ENCODE measurements at regions of chr11 and their contacts with region 1.

Region 1: GRCh38 chr11:116563028-116563711 is 209.6 kb downstream of the BUD13 start:
- DNase-seq: peak; percentile 9
- H3K4me3 ChIP-seq: no peak overlapping the region
- H3K27ac ChIP-seq: no peak overlapping the region
- H3K4me1 ChIP-seq: peaks cover 9% of the 10 kb centered on the region
- H3K27me3 ChIP-seq: no peaks in the 10 kb centered on the region
- CTCF ChIP-seq: no peak
- POLR2A ChIP-seq: no peak

Region 2: DNA sequence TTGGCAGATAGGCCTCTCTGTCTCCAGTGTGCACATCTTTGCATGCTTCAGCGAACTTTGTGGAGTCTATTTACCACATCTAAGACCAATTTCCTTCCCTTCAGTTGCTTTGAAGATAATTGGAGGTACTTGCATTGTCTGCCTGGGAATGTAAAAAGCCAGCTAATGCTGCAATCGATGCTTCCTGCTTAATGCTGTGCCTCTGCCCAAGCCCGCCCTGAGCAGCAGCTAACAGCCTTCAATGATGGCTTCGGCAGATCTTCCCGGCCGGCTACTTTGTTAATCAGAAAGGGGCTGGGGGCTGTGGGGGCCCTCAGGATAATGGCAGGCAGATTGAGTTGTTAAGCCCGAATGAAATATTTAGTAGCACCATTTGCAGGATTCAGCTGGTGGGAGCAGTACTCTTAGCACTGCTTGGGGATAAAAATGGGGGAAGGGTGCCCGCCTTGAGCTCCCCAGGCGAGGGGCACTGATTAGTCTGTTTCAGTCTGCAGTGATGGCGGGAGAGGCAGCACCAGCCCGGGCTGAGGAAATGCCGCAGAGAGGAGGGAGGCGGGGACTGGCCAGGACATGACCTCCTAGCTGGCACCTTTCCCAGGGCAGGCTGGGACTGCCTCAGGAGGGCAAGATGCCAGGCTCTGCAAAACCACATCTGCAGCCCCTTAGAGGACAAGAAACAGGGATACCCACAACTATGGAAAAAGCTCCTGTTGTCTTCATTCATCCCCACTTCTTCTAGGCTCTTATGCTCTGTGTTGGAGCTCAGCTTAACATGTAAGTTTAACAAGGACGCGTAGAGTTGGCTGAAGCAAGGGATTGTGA is 250.4 kb before region 1 on chr11:
- CTCF ChIA-PET with region 1: no interaction called
- POLR2A ChIA-PET with region 1: no interaction called
- dilution Hi-C with region 1: no loop called
- intact Hi-C with region 1: no loop called
- DNase-seq: peak; percentile 83
- H3K4me3 ChIP-seq: no peak overlapping the region
- H3K27ac ChIP-seq: no peak overlapping the region
- H3K4me1 ChIP-seq: peaks cover 12% of the 10 kb centered on the region
- H3K27me3 ChIP-seq: peaks cover 0 to 2% of the 10 kb centered on the region in 2 experiments
- CTCF ChIP-seq: no peak
- POLR2A ChIP-seq: no peak

Region 3: GRCh38 chr11:116471608-116472256 is 91.4 kb before region 1 on chr11:
- CTCF ChIA-PET with region 1: no interaction called
- POLR2A ChIA-PET with region 1: no interaction called
- dilution Hi-C with region 1: no loop called
- intact Hi-C with region 1: loop called (anchors 2 kb)
- DNase-seq: peak; percentile 96
- H3K4me3 ChIP-seq: no peak overlapping the region
- H3K27ac ChIP-seq: peak overlapping the region; percentile 75
- H3K4me1 ChIP-seq: peaks cover 25% of the 10 kb centered on the region
- H3K27me3 ChIP-seq: peaks cover under 1 to 2% of the 10 kb centered on the region in 2 experiments
- CTCF ChIP-seq: no peak
- POLR2A ChIP-seq: no peak

Region 4: DNA sequence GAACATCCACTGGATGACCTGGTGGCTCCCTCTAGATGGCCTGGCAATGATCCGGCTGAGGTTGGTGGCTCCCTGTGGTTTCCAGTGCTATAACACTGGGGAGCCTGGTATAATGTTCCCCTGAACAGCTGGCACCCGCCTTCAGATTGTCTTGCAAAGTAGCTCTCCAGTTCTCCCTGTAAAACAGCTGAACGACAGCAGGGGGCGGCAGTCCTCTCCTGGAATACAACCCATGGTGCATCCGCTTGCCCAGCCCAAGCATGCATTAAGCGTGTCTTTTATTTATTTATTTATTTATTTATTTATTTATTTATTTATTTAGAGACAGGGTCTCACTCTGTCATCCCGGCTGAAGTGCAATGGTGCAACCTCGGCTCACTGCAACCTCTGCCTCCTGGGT is 49.3 kb before region 1 on chr11:
- CTCF ChIA-PET with region 1: interaction called, 11 read pairs
- POLR2A ChIA-PET with region 1: no interaction called
- dilution Hi-C with region 1: no loop called
- intact Hi-C with region 1: no loop called
- DNase-seq: peak; percentile 78
- H3K4me3 ChIP-seq: no peak overlapping the region
- H3K27ac ChIP-seq: no peak overlapping the region
- H3K4me1 ChIP-seq: no peaks in the 10 kb centered on the region
- H3K27me3 ChIP-seq: peaks cover 0 to 5% of the 10 kb centered on the region in 2 experiments
- CTCF ChIP-seq: peak; percentile 43 to 71
- POLR2A ChIP-seq: no peak

Region 5: GRCh38 chr11:116605543-116606459 is 42.6 kb after region 1 on chr11:
- CTCF ChIA-PET with region 1: interaction called, 5 read pairs
- POLR2A ChIA-PET with region 1: interaction called, 8 read pairs
- dilution Hi-C with region 1: no loop called
- intact Hi-C with region 1: loop called (anchors 1 kb)
- DNase-seq: peak; percentile 60
- H3K4me3 ChIP-seq: no peak overlapping the region
- H3K27ac ChIP-seq: no peak overlapping the region
- H3K4me1 ChIP-seq: peaks cover 15% of the 10 kb centered on the region
- H3K27me3 ChIP-seq: no peaks in the 10 kb centered on the region
- CTCF ChIP-seq: peak; percentile 57 to 70
- POLR2A ChIP-seq: no peak

Region 6: GRCh38 chr11:116641561-116642045 is 78.4 kb after region 1 on chr11:
- CTCF ChIA-PET with region 1: interaction called, 6 read pairs
- POLR2A ChIA-PET with region 1: no interaction called
- dilution Hi-C with region 1: no loop called
- intact Hi-C with region 1: loop called (anchors 1 kb)
- DNase-seq: peak; percentile 29
- H3K4me3 ChIP-seq: no peak overlapping the region
- H3K27ac ChIP-seq: no peak overlapping the region
- H3K4me1 ChIP-seq: no peaks in the 10 kb centered on the region
- H3K27me3 ChIP-seq: no peaks in the 10 kb centered on the region
- CTCF ChIP-seq: peak; percentile 73 to 86
- POLR2A ChIP-seq: no peak

Region 7: DNA sequence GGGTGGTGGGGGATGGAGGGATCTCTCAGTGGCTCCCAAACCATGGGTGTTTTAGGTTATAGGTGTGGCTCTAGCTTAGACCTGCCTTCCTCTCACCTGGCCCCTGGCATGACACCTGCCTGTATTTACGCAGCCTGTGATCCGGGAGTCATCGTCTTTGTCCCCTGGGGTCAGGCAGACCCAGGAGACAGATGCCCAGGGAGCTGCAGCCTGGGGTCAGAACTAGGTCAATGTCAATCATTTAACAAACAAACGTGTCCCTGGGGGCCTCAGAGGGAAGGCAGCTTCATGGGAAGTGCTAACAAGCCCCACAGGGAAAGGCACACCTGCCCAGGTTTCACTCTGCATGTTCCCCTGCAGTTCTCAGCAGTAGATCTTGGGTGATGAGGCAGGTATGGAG is 739.9 kb after region 1 on chr11:
- CTCF ChIA-PET with region 1: no interaction called
- POLR2A ChIA-PET with region 1: interaction called, 13 read pairs
- dilution Hi-C with region 1: no loop called
- intact Hi-C with region 1: no loop called
- DNase-seq: no peak
- H3K4me3 ChIP-seq: no peak overlapping the region
- H3K27ac ChIP-seq: no peak overlapping the region
- H3K4me1 ChIP-seq: no peaks in the 10 kb centered on the region
- H3K27me3 ChIP-seq: no peaks in the 10 kb centered on the region
- CTCF ChIP-seq: no peak
- POLR2A ChIP-seq: no peak

Measured in endothelial cell of umbilical vein (primary cell).